A673 (cell line): ENCODE measurements at regions of chr13 and their contacts with region 1.

Region 1: DNA sequence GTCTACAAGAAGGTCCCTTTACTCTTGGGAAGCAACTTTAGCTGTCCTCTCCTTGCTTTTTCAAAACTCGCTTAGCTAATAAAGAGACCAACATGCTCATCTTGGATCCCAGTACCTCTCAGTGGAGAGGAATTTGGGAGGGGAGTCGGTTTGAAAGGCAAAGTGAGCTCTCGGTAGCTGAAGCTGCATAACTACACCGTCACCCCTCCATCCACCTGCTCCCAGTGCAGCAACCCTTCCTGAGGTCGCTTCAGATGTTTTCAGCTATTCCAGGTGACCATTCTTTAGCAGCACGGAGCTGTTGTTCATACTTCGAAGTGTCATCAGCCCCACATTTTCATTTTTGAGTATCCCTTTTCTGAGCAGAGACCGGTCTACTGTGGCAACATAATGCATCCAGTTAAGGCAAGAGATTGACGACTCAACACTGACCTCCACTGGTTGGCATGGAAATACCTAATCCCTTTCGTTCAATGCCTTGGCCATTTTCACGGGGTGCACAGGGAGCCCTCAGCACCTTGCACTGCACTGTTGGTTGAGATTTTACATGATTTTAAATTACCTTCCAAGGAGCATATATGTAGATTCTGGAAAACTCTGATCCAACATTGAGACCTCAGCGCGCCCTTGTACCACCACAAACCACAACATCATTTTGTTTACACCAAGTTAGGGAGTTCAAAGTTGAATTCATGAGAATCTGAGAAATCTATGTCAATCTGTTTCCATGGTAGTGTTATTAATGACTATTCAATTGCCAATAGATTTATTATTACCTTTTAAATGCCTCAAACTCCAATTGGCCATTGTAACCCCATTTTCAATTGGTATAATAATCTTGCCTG is 42.2 kb downstream of the DLEU7 start:
- DNase-seq: peak; percentile 76
- H3K4me3 ChIP-seq: no peak overlapping the region
- H3K27ac ChIP-seq: no peak overlapping the region
- H3K4me1 ChIP-seq: no peaks in the 10 kb centered on the region
- H3K27me3 ChIP-seq: no peaks in the 10 kb centered on the region
- CTCF ChIP-seq: peak; percentile 79

Region 2: DNA sequence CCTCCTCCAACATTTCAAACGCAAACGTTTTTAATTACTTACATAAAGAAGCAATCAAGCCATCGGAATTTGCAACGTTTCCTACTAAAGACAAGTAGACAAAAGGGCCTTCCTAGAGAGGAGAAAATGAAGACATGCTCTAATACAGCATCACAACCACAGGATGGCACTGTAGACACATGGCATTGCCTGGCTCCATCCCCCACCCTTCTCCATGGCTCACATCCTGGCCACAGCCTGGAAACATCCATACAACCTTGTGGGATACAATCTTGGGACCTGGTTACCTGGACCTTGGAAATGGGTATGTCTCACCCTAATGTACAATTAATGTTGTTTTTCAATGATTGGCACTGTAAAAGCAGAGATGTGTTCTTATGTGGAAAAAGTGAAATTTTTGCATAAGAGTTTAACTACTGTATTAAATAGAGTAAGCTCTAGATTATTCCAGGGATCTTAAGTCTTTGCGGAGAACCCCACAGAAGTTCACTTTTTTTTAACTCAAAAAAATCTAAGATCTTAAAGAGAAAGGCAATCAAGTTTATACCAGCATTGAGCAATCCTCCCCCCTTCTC is 1131.5 kb before region 1 on chr13:
- CTCF ChIA-PET with region 1: no interaction called
- POLR2A ChIA-PET with region 1: no interaction called
- intact Hi-C with region 1: loop called (anchors 10 kb)
- DNase-seq: peak; percentile 67
- H3K4me3 ChIP-seq: no peak overlapping the region
- H3K27ac ChIP-seq: no peak overlapping the region
- H3K4me1 ChIP-seq: peaks cover 11% of the 10 kb centered on the region
- H3K27me3 ChIP-seq: no peaks in the 10 kb centered on the region
- CTCF ChIP-seq: peak; percentile 69

Region 3: DNA sequence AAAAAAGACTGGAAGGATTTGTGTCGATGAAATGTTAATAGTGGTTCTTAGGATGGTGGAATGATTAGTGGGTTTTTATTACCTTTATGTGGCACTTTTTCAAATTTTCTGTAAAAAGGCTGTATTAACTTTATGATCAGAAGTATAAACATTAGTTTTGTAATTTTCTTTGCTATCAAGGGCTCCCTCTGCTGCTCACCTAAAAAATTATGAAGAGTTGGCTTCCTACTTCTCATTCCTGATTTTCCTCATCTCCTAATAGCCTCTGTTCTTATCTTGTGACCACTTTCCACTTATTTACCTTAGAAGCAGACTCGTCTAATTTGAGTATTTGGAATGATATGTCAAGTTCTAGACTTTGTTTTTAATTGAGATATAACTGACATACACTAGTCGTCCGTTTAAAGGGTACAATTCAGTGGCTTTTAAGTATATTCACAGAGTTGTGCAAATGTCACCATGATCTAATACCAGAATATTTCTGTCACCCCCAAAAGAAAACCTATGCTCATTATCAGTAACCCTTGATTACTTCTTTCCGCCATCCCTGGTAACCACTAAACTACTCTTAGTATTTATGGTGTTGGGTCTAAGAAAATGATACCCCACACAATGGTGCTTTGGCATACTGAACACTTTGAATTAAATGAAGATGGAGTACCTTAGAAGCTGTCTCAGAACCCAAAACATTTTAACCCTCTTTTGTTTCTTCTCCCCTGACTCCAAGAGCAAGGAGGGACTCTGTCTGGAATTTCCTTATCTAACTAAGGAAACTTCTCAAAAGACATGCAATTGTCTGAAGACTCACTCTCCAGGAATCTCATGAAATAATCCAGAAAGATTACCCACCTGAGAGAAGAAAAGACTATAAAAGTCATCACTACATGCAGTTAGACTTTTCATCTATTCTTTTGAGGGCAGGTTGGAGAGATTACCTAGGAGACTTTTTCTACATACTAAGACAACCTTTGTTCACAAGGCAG is 269.1 kb before region 1 on chr13:
- CTCF ChIA-PET with region 1: no interaction called
- POLR2A ChIA-PET with region 1: no interaction called
- intact Hi-C with region 1: loop called (anchors 5 kb)
- DNase-seq: peak; percentile 42
- H3K4me3 ChIP-seq: no peak overlapping the region
- H3K27ac ChIP-seq: no peak overlapping the region
- H3K4me1 ChIP-seq: no peaks in the 10 kb centered on the region
- H3K27me3 ChIP-seq: no peaks in the 10 kb centered on the region
- CTCF ChIP-seq: peak; percentile 61

Region 4: DNA sequence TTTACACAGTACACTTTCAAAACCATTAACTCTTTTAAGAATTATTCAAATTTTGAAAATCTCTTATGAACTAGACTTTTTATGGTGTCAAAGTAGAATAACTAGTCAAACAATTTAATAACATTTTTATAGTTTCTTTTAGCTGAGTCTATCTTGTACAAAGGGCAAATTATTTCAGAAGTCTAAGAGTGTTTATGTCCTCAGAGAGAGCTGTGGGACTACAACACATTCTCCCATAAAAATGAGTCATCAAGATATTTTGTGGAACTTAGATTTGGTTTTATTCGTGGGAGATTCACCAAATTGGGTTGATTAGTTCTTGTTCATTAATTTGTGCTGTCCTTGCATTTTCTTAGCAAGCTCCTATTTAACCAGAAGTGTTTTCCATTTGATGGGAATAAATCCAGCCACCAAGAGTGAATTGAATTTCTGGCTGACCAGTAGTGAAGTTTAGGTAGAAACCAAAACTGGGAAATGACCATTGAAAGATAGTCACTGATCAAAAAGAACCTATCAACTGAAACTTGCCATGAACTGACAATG is 248.8 kb before region 1 on chr13:
- CTCF ChIA-PET with region 1: no interaction called
- POLR2A ChIA-PET with region 1: interaction called, 3 read pairs
- intact Hi-C with region 1: loop called (anchors 10 kb)
- DNase-seq: no peak
- H3K4me3 ChIP-seq: no peak overlapping the region
- H3K27ac ChIP-seq: no peak overlapping the region
- H3K4me1 ChIP-seq: no peaks in the 10 kb centered on the region
- H3K27me3 ChIP-seq: no peaks in the 10 kb centered on the region
- CTCF ChIP-seq: no peak

Region 5: DNA sequence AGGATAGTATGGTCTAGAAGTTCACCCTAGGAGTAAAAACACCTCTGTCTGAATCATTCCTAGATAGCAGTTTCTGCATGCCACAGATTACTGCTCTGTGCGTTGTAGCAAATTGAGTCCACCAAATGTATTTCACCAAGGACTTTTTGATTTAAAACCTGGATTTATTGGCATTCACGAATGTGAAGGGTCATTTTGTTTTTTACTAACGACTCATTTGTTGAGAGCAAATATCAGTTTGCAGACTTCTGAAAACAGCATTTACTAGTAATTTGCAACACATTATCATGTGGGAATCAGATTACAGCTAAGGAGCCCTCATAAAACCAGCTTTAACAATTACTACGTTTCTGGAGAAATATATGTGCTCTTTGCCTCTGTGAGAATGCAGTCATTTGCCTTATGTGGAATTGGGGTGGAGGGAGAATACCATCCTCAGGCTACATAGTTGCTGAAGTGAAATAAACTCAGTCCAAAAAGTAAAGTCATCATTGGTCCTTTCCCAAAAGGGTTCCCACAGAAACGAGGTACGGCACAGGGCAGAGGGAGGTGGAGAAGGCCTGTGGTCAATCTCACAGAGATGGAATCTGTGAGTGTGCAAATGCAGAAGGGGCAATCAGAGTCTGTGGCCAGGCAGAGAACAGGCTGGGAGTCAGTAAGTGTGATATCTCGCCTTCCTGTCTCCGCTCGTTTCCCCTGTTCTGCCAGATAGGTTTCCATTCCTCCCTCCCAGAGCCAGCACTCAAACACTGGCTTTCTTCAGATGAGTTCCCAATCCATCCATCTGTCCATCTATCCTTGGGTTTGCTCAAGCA is 20.9 kb before region 1 on chr13:
- CTCF ChIA-PET with region 1: no interaction called
- POLR2A ChIA-PET with region 1: no interaction called
- intact Hi-C with region 1: no loop called
- DNase-seq: no peak
- H3K4me3 ChIP-seq: no peak overlapping the region
- H3K27ac ChIP-seq: no peak overlapping the region
- H3K4me1 ChIP-seq: no peaks in the 10 kb centered on the region
- H3K27me3 ChIP-seq: no peaks in the 10 kb centered on the region
- CTCF ChIP-seq: no peak

Region 6: DNA sequence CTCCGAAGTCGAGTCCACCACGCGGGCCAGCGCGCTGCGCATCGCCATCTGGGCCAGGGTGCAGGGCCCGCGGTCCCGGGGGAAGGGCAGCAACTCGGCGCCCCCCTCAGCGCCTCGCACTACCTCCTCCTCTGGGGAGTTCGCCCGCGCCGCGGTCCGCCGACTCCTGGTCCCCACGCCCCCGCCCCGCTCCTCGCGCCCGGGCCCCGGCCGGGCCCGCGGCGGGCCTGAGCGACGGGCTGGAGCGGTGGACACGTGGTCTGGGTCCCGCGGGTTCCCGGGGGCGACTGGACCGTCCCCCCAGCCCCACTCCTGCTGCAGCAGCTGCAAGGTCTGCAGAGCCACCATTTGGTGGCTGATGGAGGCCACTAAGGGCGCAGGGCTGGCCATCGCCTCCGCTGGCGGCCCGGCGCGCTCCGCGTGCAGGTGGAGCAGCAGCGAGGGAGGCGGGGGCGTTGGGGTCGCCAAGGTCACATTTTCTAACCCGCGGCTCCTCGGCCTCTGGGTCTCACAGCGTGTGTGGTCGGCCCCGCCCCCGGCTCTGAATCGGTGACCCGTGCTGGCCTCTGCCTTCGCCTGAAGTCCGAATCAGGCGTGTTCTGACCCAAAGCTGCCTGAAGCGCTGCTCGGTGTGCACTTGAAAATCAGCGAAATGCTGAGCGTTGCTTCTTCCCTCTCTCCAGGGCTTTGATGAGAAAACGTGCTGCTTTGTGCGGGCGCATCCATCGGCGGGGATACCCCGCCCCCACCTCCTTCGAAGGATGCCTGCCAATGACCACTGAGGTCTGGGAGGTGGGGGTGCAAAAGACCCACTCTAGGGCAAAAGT is 42.2 kb after region 1 on chr13 and contains the start of gene DLEU7:
- CTCF ChIA-PET with region 1: no interaction called
- POLR2A ChIA-PET with region 1: no interaction called
- intact Hi-C with region 1: no loop called
- DNase-seq: no peak
- H3K4me3 ChIP-seq: no peak within 1 kb of the TSS
- H3K27ac ChIP-seq: no peak within 1 kb of the TSS
- H3K4me1 ChIP-seq: no peaks in the 10 kb centered on the region
- H3K27me3 ChIP-seq: no peaks in the 10 kb centered on the region
- CTCF ChIP-seq: no peak
- total RNA-seq, gene DLEU7: not detected in 2 replicates

Region 7: GRCh38 chr13:50911937-50912795 is 110.9 kb after region 1 on chr13:
- CTCF ChIA-PET with region 1: interaction called, 4 read pairs
- POLR2A ChIA-PET with region 1: interaction called, 3 read pairs
- intact Hi-C with region 1: loop called (anchors 5 kb)
- DNase-seq: peak; percentile 89
- H3K4me3 ChIP-seq: peak overlapping the region; percentile 70
- H3K27ac ChIP-seq: no peak overlapping the region
- H3K4me1 ChIP-seq: peaks cover 18% of the 10 kb centered on the region
- H3K27me3 ChIP-seq: no peaks in the 10 kb centered on the region
- CTCF ChIP-seq: peak; percentile 92

Region 8: GRCh38 chr13:51070005-51070649 is 268.8 kb after region 1 on chr13:
- CTCF ChIA-PET with region 1: no interaction called
- POLR2A ChIA-PET with region 1: no interaction called
- intact Hi-C with region 1: loop called (anchors 5 kb)
- DNase-seq: peak; percentile 85
- H3K4me3 ChIP-seq: no peak overlapping the region
- H3K27ac ChIP-seq: no peak overlapping the region
- H3K4me1 ChIP-seq: no peaks in the 10 kb centered on the region
- H3K27me3 ChIP-seq: no peaks in the 10 kb centered on the region
- CTCF ChIP-seq: peak; percentile 91

Region 9: DNA sequence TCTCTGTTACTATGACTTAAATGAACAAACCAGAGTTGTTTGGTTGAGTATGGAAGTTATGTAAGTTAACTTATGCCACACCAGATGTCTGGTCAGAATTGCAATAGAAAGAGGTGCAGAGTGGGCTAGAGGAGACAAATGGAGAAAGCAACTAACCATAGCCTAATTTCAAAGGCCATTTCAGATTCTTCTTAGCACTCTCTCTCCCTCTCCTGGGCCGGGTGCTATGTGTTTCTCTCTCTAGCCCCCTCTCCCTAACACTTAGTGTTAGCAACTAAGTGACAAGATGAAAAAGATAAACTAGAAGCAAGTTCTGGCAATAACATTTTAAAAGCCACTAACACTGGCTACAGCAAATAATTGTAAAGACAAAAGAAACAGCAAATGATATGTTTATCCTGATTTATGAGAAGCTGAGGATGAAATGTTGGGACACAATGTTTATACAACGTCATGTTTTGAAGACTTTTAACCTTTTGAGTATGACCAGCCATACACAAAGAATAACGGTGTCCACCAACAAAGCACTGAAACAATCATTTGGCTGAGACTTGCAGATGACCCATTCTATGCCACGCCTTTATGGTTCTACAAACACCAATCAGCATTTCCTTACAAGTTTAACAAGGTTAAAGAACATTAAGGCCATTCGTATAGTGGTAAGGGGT is 556.8 kb after region 1 on chr13:
- CTCF ChIA-PET with region 1: no interaction called
- POLR2A ChIA-PET with region 1: no interaction called
- intact Hi-C with region 1: no loop called
- DNase-seq: no peak
- H3K4me3 ChIP-seq: no peak overlapping the region
- H3K27ac ChIP-seq: no peak overlapping the region
- H3K4me1 ChIP-seq: no peaks in the 10 kb centered on the region
- H3K27me3 ChIP-seq: no peaks in the 10 kb centered on the region
- CTCF ChIP-seq: no peak